ENCODE measurements at regions of chr2 and their contacts with region 1.

Region 1: DNA sequence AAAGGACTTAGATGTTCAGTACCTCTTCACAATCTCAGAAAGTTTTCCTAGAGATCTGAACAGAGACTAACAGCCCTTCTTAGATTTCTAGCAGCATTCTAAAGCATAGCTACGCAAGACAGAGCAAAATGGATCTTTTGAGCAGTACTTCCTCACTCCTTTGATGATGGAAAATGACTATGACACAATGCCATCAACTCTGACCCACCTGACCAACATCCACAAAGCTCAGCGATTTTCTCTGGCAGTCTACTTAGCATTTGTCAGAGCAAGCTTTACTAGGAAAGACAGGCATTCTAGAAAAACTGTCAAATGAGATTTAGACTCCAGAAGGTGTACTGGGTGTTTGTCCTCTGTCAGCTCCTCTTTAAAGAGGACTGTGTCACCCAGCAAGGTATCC is 180.9 kb upstream of the ACVR2A start:
- H3K4me3 Mint-ChIP-seq: peak overlapping the region; percentile 13
- H3K27ac Mint-ChIP-seq: peak overlapping the region; percentile 50
- H3K4me1 Mint-ChIP-seq: peaks cover 28% of the 10 kb centered on the region
- H3K27me3 Mint-ChIP-seq: no peaks in the 10 kb centered on the region

Region 2: DNA sequence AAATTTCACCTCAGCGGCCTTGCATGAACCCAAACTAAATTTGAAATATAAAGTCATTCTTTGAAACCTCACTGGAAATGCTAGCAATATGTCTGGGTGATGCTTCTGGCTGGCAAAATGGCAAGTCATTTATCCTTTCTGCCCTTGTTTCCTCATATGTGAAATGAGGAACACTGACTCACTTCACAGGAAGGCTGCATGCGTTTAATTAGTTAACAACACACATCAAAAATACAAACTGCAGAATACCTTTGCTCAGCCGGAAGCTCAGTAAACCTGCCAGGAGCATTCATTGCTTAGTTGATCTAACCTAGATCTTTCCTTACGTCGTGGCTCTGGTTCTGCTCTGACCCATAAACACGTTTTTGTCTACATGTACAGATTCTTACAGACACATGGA is 33.4 kb before region 1 on chr2:
- intact Hi-C with region 1: loop called (anchors 2 kb)
- H3K4me3 Mint-ChIP-seq: no peak overlapping the region
- H3K27ac Mint-ChIP-seq: no peak overlapping the region
- H3K4me1 Mint-ChIP-seq: no peaks in the 10 kb centered on the region
- H3K27me3 Mint-ChIP-seq: no peaks in the 10 kb centered on the region

Measured in dendritic cell treated with granulocyte-macrophage colony-stimulating factor and Interleukin-4, amounts not matched to agents 40 ng/mL and 50 ng/mL, for 4 days (primary cell).